Posterior cingulate gyrus (tissue), 11 donors: ENCODE measurements at regions of chrX and their contacts with region 1.

Region 1: GRCh38 chrX:46994096-46994495 is 81.9 kb downstream of the JADE3 start:
- DNase-seq: peak in 5 of 10 donors; percentile 8 to 77 (median 37)

Region 2: GRCh38 chrX:46912098-46912602 is 81.9 kb before region 1 on chrX and contains the start of gene JADE3:
- intact Hi-C with region 1: loop called (anchors 10 kb)
- DNase-seq: peak; percentile 19 to 92 (median 34)